Activated CD8-positive, alpha-beta memory T cell treated with anti-CD3 and anti-CD28 coated beads, Interleukin-2, amount 10 ng/mL, durations not matched to agents 7 days and 5 days (primary cell): ENCODE measurements at regions of chr5 and their contacts with region 1.

Region 1: DNA sequence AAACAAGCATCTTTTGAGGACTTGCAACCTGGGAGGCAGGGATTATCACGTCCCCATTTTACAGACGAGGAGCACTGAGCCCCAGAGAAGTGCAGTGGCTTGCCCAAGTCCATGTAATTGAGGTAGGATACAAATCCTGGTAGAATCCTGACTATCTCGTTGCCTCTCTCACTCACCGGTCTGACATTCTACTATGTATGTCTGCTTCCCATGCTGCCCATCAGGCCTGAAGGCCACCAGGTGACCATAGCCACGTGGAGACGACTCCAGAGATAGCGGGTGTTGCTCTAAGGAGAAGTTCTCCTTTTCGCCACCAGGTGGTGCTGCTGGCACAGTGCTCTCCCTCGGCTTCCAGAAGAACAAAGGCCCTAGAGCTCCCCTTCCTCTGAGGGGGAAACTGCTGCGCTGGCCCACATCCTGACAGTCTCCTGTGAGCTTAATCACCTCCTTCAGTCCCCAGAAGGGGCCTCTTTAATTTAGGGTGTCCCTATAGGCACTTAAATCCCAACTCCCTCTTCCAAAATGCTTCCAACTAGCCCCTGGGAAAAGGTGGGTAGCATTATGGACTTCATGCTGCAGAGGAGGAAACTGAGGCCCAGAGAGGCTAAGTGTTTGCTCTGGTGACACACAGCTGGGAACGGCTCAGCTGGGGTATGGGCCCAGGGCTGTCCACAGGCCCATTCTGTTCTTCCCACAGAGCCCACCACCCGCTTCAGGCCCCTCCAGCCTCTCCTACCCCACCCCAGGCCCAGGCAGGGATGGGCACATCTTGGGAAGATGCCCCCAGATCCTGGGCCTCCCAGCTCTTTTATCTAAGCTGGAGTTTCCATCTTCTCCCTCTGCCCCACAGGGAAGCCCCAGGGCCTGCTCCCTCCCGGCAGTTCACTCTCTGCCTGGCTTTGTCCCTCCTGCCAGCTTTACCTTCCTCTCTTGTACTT is 6.4 kb downstream of the SLC34A1 start:
- DNase-seq: peak; percentile 93
- ATAC-seq: peak; percentile 72
- H3K4me3 Mint-ChIP-seq: peak overlapping the region; percentile 37
- H3K27ac Mint-ChIP-seq: peak overlapping the region; percentile 88
- H3K4me1 Mint-ChIP-seq: peaks cover 47% of the 10 kb centered on the region
- H3K27me3 Mint-ChIP-seq: no peaks in the 10 kb centered on the region

Region 2: GRCh38 chr5:177311723-177312648 is 78.6 kb before region 1 on chr5 and contains the start of gene MXD3:
- CTCF ChIA-PET with region 1: interaction called, 32 read pairs
- DNase-seq: peak; percentile 99
- ATAC-seq: peak; percentile 88
- H3K4me3 Mint-ChIP-seq: peak within 1 kb of the TSS; percentile 97
- H3K27ac Mint-ChIP-seq: peak within 1 kb of the TSS; percentile 95
- H3K4me1 Mint-ChIP-seq: peaks cover 52% of the 10 kb centered on the region
- H3K27me3 Mint-ChIP-seq: no peaks in the 10 kb centered on the region
- total RNA-seq, gene MXD3: 60.2 to 117 TPM

Region 3: DNA sequence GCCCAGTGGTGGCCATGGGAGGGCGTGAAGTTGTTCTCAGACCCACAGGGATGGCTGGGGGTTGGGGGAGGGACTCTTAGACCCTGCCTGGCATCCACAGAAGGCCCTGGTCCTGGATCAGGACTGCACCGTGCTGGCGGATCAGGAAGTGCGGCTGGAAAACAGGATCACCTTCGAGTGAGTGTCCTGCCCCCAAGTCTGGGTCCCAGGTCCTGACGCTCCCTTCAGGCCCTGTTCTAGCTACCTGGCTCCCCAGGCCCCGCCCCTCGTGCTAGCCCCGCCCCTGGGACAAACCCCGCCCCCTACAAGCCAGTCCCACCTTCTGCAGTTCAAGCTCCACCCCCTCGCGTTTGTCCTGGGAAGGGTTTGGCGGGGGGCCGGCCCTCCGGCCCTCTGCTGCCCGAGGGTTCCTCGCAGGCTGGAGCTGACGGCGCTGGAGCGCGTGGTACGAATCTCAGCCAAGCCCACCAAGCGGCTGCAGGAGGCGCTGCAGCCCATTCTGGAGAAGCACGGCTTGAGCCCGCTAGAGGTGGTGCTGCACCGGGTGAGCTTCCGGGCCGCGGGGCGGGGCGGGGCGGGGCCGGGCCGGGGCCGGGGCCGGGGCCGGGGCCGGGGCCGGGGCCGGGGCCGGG is 20.0 kb before region 1 on chr5:
- CTCF ChIA-PET with region 1: interaction called, 405 read pairs
- DNase-seq: peak; percentile 77
- ATAC-seq: peak; percentile 83
- H3K4me3 Mint-ChIP-seq: peak overlapping the region; percentile 53
- H3K27ac Mint-ChIP-seq: no peak overlapping the region
- H3K4me1 Mint-ChIP-seq: peaks cover 56% of the 10 kb centered on the region
- H3K27me3 Mint-ChIP-seq: no peaks in the 10 kb centered on the region

Region 4: GRCh38 chr5:177412603-177413233 is 22.1 kb after region 1 on chr5:
- CTCF ChIA-PET with region 1: interaction called, 23 read pairs
- DNase-seq: no peak
- ATAC-seq: peak; percentile 67
- H3K4me3 Mint-ChIP-seq: peak overlapping the region; percentile 43
- H3K27ac Mint-ChIP-seq: peak overlapping the region; percentile 79
- H3K4me1 Mint-ChIP-seq: peaks cover 31% of the 10 kb centered on the region
- H3K27me3 Mint-ChIP-seq: no peaks in the 10 kb centered on the region

Region 5: DNA sequence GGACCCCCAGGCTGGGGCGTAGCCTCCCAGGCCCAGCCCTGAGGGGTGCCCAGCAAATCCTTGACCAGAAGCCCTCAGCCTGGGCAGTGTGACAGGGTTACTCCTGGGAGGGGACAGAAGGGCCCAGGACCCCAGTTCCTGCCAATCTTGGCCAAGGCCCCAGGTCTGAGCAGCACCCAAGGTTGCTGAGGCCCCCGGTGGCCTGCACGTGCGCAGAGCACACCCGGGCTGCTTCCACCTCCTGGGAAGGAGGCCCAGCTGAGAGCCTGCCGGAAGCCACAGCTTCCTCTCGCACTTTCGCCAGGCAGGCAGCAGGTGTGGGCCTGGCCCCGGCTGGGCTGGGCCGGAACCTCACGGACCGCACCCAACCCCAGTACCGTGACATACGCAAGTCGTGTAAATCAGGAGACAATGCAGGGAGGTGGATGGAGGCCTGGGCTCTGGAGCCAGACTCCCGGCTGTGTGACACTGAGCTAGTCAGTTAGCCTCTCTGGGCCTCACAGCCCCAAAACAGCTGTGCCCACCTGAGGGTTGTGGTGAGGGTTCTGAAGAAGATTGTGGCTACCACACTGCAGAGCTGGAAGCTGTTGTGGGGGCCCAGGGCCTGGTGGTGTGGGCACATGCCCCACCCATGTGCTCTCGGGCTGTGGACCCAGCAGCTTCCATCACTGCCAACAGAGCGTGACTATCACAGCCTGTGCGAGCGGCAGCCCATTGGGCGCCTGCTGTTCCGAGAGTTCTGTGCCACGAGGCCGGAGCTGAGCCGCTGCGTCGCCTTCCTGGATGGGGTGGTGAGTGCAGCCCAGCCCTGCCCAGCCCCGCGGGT is 40.9 kb after region 1 on chr5:
- CTCF ChIA-PET with region 1: interaction called, 39 read pairs
- DNase-seq: peak; percentile 93
- ATAC-seq: peak; percentile 60
- H3K4me3 Mint-ChIP-seq: peak overlapping the region; percentile 89
- H3K27ac Mint-ChIP-seq: peak overlapping the region; percentile 94
- H3K4me1 Mint-ChIP-seq: peaks cover 73% of the 10 kb centered on the region
- H3K27me3 Mint-ChIP-seq: no peaks in the 10 kb centered on the region

Region 6: GRCh38 chr5:177446200-177447065 is 55.8 kb after region 1 on chr5 and contains the start of gene PRR7:
- CTCF ChIA-PET with region 1: interaction called, 249 read pairs
- DNase-seq: peak; percentile 79
- ATAC-seq: peak; percentile 74
- H3K4me3 Mint-ChIP-seq: peak within 1 kb of the TSS; percentile 60
- H3K27ac Mint-ChIP-seq: peak within 1 kb of the TSS; percentile 76
- H3K4me1 Mint-ChIP-seq: peaks cover 39% of the 10 kb centered on the region
- H3K27me3 Mint-ChIP-seq: peaks cover 10% of the 10 kb centered on the region
- total RNA-seq, gene PRR7: 3.1 to 5.3 TPM

Region 7: DNA sequence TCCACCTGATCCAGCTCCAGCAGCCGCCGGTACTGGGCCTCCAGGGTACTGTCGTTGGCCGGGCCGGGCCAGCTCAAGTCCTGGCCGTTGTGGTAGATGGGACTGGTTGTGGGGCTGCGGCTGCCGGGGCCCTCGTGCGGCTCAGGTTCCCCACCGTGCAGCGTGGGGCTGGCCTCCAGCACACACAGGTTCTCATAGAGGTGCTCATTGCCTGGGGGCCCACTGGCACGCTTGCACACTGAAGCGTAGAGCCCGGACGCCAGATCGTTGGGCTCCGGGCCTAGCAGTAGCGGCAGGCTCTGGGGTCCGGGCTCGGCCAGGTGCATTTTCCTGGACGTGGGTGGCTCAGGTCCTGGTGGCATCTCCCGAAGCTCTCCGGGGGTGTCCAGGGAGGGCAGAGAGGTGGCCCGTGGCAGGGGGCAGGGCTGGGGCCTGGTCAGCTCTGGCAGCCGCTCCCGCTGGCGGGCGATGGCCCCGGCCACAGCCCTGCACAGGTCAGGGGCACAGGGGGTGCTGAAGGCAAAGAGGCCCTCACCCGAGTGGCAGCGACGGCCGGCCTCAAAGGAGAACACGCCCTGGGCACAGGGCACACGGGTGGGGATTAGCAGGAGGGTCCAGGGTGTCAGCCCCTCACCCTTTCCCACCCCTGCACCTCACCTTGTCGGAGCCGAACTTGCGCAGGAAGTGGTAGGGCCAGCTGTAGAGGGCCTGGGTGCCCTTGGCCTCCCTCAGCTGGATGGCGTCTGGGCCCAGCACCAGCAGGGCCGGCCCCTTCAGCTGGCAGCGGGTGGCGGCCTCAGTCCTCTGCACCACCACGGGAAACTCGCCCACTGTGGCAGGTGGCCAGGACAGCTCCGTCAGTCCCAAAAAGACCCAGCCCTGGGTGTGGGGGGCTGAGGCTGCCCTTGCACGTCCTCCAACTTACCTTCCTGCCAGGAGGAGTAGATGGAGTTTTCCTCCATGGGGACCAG is 113.7 kb after region 1 on chr5:
- CTCF ChIA-PET with region 1: interaction called, 86 read pairs
- DNase-seq: no peak
- ATAC-seq: no peak
- H3K4me3 Mint-ChIP-seq: no peak overlapping the region
- H3K27ac Mint-ChIP-seq: no peak overlapping the region
- H3K4me1 Mint-ChIP-seq: peaks cover 3% of the 10 kb centered on the region
- H3K27me3 Mint-ChIP-seq: peaks cover 10% of the 10 kb centered on the region